MCF 10A (cell line): ENCODE measurements at regions of chr2 and their contacts with region 1.

Region 1: DNA sequence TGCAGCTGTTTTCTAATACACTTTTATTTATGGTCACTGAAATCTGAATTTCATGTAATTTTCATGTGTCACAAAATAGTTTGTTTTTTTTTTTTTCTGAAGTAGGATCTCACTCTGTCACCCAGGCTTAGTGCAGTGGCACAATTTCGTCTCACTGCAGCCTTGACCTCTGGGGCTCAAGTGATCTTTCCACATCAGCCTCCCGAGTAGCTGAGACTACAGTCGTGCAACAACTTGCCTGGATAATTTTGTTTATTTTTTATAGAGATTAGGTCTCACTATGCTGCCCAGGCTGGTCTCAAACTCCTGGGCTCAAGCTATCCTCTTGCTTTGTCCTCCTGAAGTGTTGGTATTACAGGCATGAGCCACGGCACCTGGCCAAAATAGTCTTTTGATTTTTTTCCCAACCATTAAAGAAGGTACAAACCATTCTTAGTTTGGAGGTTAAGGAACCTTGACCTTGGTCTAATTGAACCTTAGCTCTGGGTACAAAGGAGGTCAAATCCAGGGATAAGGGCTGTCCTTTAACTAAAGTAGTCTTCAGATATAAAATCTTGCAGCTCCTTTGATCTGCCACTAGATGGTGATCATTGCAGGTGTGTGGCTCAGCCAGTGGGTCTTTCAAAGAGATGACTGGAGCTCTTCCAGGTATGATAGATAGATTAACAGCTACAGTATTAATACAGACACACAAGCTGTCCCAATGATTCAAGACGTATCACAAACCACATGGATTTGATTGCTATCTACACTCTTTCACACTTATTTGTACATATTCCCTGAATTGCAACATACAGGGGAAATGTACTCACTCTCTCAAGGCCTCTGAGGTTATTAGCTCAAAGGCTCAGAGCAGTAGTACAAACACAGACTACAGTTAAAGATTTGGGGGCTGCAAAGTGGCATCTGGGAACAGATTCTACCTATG is 4.7 kb upstream of the KRCC1 start:
- DNase-seq: peak; percentile 55
- H3K4me3 Mint-ChIP-seq: no peak overlapping the region
- H3K27ac Mint-ChIP-seq: no peak overlapping the region
- H3K4me1 Mint-ChIP-seq: peaks cover 6% of the 10 kb centered on the region
- H3K27me3 Mint-ChIP-seq: no peaks in the 10 kb centered on the region
- CTCF ChIP-seq: peak; percentile 82

Region 2: DNA sequence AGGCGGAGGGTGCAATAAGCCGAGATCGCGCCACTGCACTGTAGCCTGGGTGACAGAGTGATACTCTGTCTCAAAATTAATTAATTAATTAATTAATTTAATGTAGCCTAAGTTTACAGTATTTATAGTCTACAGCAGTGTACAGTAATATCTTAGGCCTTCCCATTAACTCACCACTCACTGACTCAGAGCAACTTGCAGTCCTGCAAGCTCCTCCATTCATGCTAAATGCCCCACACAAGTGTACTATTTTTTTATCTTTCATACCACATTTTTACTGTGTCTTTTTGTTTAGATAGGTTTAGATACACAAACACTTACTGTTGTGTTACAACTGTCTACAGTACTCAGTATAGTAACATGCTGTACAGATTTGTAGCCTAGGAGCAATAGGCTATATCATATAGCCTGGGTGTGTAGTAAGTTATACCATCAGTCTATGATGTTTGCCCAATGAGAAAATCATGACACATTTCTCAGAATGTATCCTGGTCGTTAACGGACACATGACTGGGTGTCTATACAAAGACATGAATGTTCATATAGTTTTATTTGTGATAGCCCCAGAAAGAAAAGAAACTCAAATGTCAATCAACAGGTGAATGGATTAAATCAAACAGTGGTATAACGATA is 28.1 kb before region 1 on chr2:
- CTCF ChIA-PET with region 1: interaction called, 11 read pairs
- POLR2A ChIA-PET with region 1: no interaction called
- intact Hi-C with region 1: no loop called
- DNase-seq: no peak
- H3K4me3 Mint-ChIP-seq: no peak overlapping the region
- H3K27ac Mint-ChIP-seq: no peak overlapping the region
- H3K4me1 Mint-ChIP-seq: peaks cover 5% of the 10 kb centered on the region
- H3K27me3 Mint-ChIP-seq: no peaks in the 10 kb centered on the region
- CTCF ChIP-seq: no peak

Region 3: DNA sequence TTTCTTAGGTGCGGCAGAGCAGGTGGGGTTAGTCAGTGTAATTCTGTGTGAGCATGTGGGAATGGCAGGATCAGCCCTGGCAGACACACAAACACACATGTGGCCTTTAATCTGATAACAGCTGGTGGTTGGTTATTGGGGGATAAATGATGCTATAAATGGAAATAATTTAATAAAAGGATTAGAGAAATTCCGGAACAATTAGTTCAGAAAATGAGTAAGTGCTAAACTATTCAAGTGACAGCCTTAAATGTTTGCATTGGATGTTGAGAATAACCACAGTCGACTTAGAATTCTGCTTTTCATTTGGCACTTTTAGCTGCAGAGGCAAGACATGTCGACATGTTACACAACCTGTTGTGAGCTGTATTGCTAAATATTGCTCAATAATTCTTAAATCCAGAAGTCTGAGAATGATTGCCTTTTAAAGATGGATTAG is 14.6 kb after region 1 on chr2:
- CTCF ChIA-PET with region 1: interaction called, 69 read pairs
- POLR2A ChIA-PET with region 1: interaction called, 4 read pairs
- intact Hi-C with region 1: no loop called
- DNase-seq: peak; percentile 66
- H3K4me3 Mint-ChIP-seq: no peak overlapping the region
- H3K27ac Mint-ChIP-seq: peak overlapping the region; percentile 49
- H3K4me1 Mint-ChIP-seq: peaks cover 14% of the 10 kb centered on the region
- H3K27me3 Mint-ChIP-seq: no peaks in the 10 kb centered on the region
- CTCF ChIP-seq: no peak

Region 4: DNA sequence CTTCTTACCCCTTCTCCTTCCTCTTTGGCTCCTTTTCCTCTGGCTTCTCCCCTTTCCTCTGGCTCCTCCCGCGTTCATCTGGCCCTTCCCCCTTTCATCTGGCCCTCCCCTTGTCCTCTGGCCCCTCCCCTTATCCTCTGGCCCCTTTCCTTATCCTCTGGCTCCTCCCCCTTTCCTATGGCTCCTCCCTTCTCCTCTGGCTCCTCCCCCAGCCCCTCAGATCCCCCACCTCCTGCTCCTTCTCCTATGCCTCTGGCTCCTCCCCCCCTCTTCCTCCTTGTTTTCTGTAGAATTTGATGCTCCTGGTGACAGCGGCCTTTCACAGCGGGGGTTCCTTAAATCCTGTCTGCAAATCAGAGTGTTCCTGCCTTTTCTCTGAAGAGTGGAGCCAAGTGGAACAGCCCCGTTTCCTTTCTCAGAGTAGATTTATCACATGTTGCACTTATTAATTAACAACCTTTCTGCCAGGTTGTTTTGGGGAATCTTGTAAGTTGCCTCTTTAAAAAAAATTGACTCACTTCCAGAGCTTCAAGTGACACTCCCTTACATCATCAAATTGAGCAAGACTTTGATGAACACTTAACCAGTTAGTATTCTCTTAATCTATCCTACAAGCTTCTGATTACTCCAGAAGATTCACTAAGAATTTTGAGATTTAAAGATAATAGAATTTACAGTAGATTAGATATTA is 39.7 kb after region 1 on chr2:
- CTCF ChIA-PET with region 1: interaction called, 11 read pairs
- POLR2A ChIA-PET with region 1: interaction called, 4 read pairs
- intact Hi-C with region 1: no loop called
- DNase-seq: peak; percentile 50
- H3K4me3 Mint-ChIP-seq: no peak overlapping the region
- H3K27ac Mint-ChIP-seq: no peak overlapping the region
- H3K4me1 Mint-ChIP-seq: peaks cover 10% of the 10 kb centered on the region
- H3K27me3 Mint-ChIP-seq: peaks cover 23% of the 10 kb centered on the region
- CTCF ChIP-seq: no peak

Region 5: GRCh38 chr2:88136817-88137216 is 76.6 kb after region 1 on chr2:
- CTCF ChIA-PET with region 1: interaction called, 13 read pairs
- POLR2A ChIA-PET with region 1: no interaction called
- intact Hi-C with region 1: no loop called
- DNase-seq: no peak
- H3K4me3 Mint-ChIP-seq: no peak overlapping the region
- H3K27ac Mint-ChIP-seq: no peak overlapping the region
- H3K4me1 Mint-ChIP-seq: no peaks in the 10 kb centered on the region
- H3K27me3 Mint-ChIP-seq: peaks cover 57% of the 10 kb centered on the region
- CTCF ChIP-seq: no peak

Region 6: DNA sequence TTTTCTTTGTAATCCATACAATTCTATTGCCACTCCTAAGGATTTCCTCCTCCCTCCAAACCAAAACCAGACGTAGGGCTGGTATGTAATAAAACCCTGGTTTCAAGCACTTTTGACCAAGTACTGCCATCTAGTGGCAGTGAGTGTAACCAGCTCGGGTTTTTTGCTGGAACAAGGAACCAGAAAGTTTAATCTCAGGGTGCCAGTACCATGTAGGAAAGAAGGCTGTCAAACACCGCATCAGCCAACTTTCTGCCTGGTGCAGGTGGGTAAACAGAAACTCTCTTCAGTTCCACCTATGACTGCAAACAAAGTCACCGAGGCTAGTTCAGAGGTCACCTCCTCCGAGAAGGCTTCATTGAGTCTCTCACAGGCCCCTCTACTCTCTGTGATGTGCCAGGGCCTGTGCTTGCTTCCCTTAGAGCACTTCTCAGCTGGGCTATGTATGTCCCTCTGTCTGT is 99.7 kb after region 1 on chr2:
- CTCF ChIA-PET with region 1: interaction called, 293 read pairs
- POLR2A ChIA-PET with region 1: interaction called, 18 read pairs
- intact Hi-C with region 1: loop called (anchors 1 kb)
- DNase-seq: peak; percentile 78
- H3K4me3 Mint-ChIP-seq: no peak overlapping the region
- H3K27ac Mint-ChIP-seq: no peak overlapping the region
- H3K4me1 Mint-ChIP-seq: no peaks in the 10 kb centered on the region
- H3K27me3 Mint-ChIP-seq: no peaks in the 10 kb centered on the region
- CTCF ChIP-seq: peak; percentile 78

Region 7: GRCh38 chr2:88181511-88181910 is 121.3 kb after region 1 on chr2:
- CTCF ChIA-PET with region 1: interaction called, 104 read pairs
- POLR2A ChIA-PET with region 1: interaction called, 8 read pairs
- intact Hi-C with region 1: no loop called
- DNase-seq: peak; percentile 33
- H3K4me3 Mint-ChIP-seq: no peak overlapping the region
- H3K27ac Mint-ChIP-seq: peak overlapping the region; percentile 54
- H3K4me1 Mint-ChIP-seq: peaks cover 11% of the 10 kb centered on the region
- H3K27me3 Mint-ChIP-seq: no peaks in the 10 kb centered on the region
- CTCF ChIP-seq: no peak